ENCODE measurements at regions of chr17 and their contacts with region 1.

Region 1: DNA sequence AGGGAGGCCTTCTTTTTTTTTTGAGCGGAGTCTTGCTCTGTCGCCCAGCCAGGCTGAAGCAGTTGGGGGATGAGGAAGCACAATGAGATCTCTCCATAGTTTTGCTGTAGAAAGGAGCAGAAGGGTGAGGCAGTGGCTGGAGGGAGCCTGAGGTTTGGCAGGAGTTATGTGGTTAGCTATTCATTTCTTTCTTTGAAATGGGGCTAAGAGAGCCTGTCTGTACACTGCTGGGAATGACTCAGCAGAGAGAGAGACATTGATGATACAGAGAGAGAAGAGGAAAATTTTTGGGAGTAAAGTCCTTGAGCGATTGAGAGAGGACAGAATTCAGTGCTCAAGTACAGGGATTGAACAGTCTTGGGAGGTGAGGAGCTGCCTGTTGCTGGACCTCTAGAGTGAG is 22.1 kb downstream of the NOS2 start:
- DNase-seq: no peak
- H3K4me3 ChIP-seq: no peak overlapping the region
- H3K27ac ChIP-seq: no peak overlapping the region
- H3K4me1 ChIP-seq: no peaks in the 10 kb centered on the region
- H3K27me3 ChIP-seq: no peaks in the 10 kb centered on the region
- CTCF ChIP-seq: no peak

Region 2: GRCh38 chr17:27741361-27741861 is 36.8 kb before region 1 on chr17:
- CTCF ChIA-PET with region 1: no interaction called
- POLR2A ChIA-PET with region 1: no interaction called
- intact Hi-C with region 1: loop called (anchors 5 kb)
- DNase-seq: no peak
- H3K4me3 ChIP-seq: no peak overlapping the region
- H3K27ac ChIP-seq: no peak overlapping the region
- H3K4me1 ChIP-seq: no peaks in the 10 kb centered on the region
- H3K27me3 ChIP-seq: no peaks in the 10 kb centered on the region
- CTCF ChIP-seq: no peak